MCF 10A (cell line): ENCODE measurements at regions of chr6 and their contacts with region 1.

Region 1: DNA sequence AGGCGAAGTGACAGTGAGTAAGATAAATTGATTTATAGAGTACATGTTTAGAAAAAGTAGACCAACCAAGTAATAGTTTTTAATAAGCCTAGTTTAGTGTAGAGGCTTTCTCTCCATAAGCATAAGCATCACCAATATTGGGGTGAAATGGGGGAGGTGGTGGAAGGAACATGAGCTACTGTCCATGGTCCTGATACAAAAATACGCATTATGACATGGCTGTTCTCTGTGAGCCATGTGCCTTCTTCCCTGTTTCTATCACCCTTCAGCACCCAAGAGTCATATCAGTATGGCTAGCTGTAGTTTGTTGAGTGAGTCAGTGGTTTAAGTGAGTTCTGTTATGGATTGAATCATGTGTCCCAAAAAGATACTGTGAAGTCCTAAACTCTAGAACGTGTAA is 150.8 kb downstream of the EDN1 start:
- DNase-seq: peak; percentile 38
- H3K4me3 Mint-ChIP-seq: no peak overlapping the region
- H3K27ac Mint-ChIP-seq: no peak overlapping the region
- H3K4me1 Mint-ChIP-seq: peaks cover 11% of the 10 kb centered on the region
- H3K27me3 Mint-ChIP-seq: no peaks in the 10 kb centered on the region
- CTCF ChIP-seq: no peak

Region 2: GRCh38 chr6:12369781-12370262 is 71.2 kb before region 1 on chr6:
- CTCF ChIA-PET with region 1: no interaction called
- POLR2A ChIA-PET with region 1: no interaction called
- intact Hi-C with region 1: loop called (anchors 5 kb)
- DNase-seq: peak; percentile 93
- H3K4me3 Mint-ChIP-seq: no peak overlapping the region
- H3K27ac Mint-ChIP-seq: no peak overlapping the region
- H3K4me1 Mint-ChIP-seq: peaks cover 12% of the 10 kb centered on the region
- H3K27me3 Mint-ChIP-seq: no peaks in the 10 kb centered on the region
- CTCF ChIP-seq: no peak

Region 3: GRCh38 chr6:12791371-12792000 is 350.5 kb after region 1 on chr6:
- CTCF ChIA-PET with region 1: no interaction called
- POLR2A ChIA-PET with region 1: no interaction called
- intact Hi-C with region 1: no loop called
- DNase-seq: peak; percentile 7
- H3K4me3 Mint-ChIP-seq: no peak overlapping the region
- H3K27ac Mint-ChIP-seq: no peak overlapping the region
- H3K4me1 Mint-ChIP-seq: no peaks in the 10 kb centered on the region
- H3K27me3 Mint-ChIP-seq: peaks cover 39% of the 10 kb centered on the region
- CTCF ChIP-seq: no peak